ENCODE measurements at regions of chr9 and their contacts with region 1.

Region 1: DNA sequence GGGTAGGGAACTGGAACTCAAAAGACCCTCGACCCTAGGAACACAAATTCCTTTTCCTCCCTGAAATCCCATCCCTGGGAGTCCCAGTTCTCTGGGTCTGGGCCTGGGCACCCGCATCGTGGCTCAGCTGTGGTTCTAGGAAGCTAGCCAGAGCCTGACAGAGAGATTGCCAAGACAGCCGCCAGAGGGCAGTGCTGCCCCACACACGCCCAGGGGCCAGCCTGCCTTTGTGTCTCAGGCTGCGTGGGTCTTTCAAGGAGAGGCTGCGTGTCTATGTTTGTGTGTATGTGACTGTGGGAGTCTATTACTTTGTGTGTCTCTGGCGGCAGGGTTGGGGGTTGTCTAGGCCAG is 32.0 kb upstream of the TTLL11 start:
- DNase-seq: peak in 1 of 2 experiments; percentile 92
- H3K4me3 ChIP-seq: 0 out of 8 replicates have a peak overlapping the region, but pooled peaks of 1 of the 4 experiments have one; percentile 67
- H3K27ac ChIP-seq: no peak overlapping the region
- H3K4me1 ChIP-seq: peaks cover 0 to 10% (median 3%) of the 10 kb centered on the region in 4 experiments; a peak in 6 of 7 replicates
- H3K27me3 ChIP-seq: peaks cover 9 to 26% (median 24%) of the 10 kb centered on the region in 4 experiments
- CTCF ChIP-seq: peak in 2 of 3 experiments; percentile 95 to 96; a peak in 3 of 4 replicates
- EP300 ChIP-seq: no peak
- POLR2A ChIP-seq: no peak
- RAD21 ChIP-seq: peak; percentile 99

Region 2: GRCh38 chr9:122087406-122088200 is 37.5 kb before region 1 on chr9:
- CTCF ChIA-PET with region 1: interaction called, 405 read pairs
- POLR2A ChIA-PET with region 1: no interaction called
- DNase-seq: no peak
- H3K4me3 ChIP-seq: no peak overlapping the region
- H3K27ac ChIP-seq: no peak overlapping the region
- H3K4me1 ChIP-seq: peaks cover 0 to 5% (median 0%) of the 10 kb centered on the region in 4 experiments; a peak in 4 of 7 replicates
- H3K27me3 ChIP-seq: peaks cover 0 to 10% (median 9%) of the 10 kb centered on the region in 4 experiments; a peak in 5 of 7 replicates
- CTCF ChIP-seq: no peak
- EP300 ChIP-seq: no peak
- POLR2A ChIP-seq: no peak
- RAD21 ChIP-seq: no peak

Region 3: DNA sequence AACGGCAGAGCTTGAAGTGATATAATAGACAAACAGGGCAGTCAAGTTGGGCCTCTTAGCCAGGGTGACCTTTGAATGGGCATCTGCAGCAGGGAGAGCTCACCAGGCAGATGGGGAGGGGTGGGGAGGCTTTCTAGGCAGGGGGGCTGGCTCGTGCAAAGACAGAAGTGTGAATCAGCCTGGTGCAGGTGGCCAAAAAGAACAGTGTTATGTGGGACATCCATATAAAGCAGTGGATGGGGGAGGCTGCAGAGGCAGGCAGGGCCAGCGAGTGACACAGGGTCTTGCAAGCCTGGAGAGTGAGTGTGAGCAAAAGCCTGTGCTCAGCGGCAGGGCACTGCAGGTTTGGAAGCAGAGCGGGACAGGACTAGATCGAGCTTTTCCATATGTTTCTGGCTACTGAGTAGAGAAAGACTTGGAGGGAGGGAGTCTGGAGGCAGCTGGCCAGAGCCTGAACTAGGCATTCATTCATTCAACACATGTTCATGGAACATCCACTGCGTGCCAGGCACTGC is 17.8 kb before region 1 on chr9:
- CTCF ChIA-PET with region 1: interaction called, 192 read pairs
- POLR2A ChIA-PET with region 1: no interaction called
- DNase-seq: no peak
- H3K4me3 ChIP-seq: no peak overlapping the region
- H3K27ac ChIP-seq: no peak overlapping the region
- H3K4me1 ChIP-seq: peaks cover 0 to 3% (median under 1%) of the 10 kb centered on the region in 4 experiments; a peak in 4 of 7 replicates
- H3K27me3 ChIP-seq: no peaks in the 10 kb centered on the region; a peak in 2 of 7 replicates
- CTCF ChIP-seq: no peak
- EP300 ChIP-seq: no peak
- POLR2A ChIP-seq: no peak
- RAD21 ChIP-seq: no peak

Region 4: GRCh38 chr9:122180651-122181050 is 55.5 kb after region 1 on chr9:
- CTCF ChIA-PET with region 1: interaction called, 11 read pairs
- POLR2A ChIA-PET with region 1: no interaction called
- DNase-seq: no peak
- H3K4me3 ChIP-seq: no peak overlapping the region
- H3K27ac ChIP-seq: no peak overlapping the region
- H3K4me1 ChIP-seq: no peaks in the 10 kb centered on the region; a peak in 1 of 7 replicates
- H3K27me3 ChIP-seq: no peaks in the 10 kb centered on the region
- CTCF ChIP-seq: no peak
- EP300 ChIP-seq: no peak
- POLR2A ChIP-seq: no peak
- RAD21 ChIP-seq: no peak

Region 5: DNA sequence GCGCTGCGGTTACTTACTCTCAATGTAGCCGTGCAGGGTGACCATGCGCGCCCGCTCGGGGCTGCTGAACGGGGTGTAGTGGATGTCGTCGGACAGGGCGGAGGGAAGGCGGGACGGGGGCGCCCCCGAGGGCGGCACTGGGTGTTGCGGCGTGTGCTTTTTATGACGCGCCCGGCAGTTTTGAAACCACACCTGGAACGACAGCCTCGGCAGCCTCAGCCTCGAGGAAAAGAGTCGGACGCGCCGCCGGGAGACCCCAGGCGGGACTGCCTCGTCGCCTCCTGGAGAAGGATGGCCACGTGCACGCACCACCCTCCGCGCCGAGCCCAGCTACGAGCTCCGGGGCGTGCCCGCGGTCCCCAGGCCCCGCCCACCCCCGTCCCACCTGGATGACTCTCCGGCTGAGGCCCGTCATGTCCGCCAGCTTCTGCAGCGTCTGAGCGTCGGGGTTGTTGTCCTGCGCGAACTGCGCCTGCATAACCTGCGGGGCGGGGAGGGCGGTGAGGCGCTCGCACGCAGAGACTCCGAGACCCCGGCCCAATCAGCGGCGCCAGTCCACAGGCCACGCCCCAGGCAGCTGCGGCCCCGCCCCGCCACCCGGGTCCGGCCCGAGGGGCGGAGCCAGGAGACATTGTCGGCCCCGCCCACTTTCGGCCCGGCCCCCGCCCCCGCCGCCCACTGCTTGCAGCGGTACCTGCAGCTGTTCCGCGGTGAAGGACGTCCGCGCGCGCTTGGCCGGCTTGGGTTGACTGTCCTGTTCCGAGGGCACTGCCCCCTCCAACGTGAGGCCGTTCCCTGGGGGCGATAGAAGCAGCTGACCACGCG is 88.7 kb after region 1 on chr9:
- CTCF ChIA-PET with region 1: interaction called, 56 read pairs
- POLR2A ChIA-PET with region 1: no interaction called
- DNase-seq: peak; percentile 87 to 97
- H3K4me3 ChIP-seq: peak overlapping the region; percentile 41 to 67 (median 52); a peak in 7 of 8 replicates
- H3K27ac ChIP-seq: no peak overlapping the region
- H3K4me1 ChIP-seq: peaks cover 0 to 13% (median 10%) of the 10 kb centered on the region in 4 experiments; a peak in 6 of 7 replicates
- H3K27me3 ChIP-seq: peaks cover 52 to 73% (median 68%) of the 10 kb centered on the region in 4 experiments
- CTCF ChIP-seq: no peak
- EP300 ChIP-seq: no peak
- POLR2A ChIP-seq: no peak
- RAD21 ChIP-seq: peak; percentile 18 to 20; a peak in 3 of 4 replicates

Region 6: DNA sequence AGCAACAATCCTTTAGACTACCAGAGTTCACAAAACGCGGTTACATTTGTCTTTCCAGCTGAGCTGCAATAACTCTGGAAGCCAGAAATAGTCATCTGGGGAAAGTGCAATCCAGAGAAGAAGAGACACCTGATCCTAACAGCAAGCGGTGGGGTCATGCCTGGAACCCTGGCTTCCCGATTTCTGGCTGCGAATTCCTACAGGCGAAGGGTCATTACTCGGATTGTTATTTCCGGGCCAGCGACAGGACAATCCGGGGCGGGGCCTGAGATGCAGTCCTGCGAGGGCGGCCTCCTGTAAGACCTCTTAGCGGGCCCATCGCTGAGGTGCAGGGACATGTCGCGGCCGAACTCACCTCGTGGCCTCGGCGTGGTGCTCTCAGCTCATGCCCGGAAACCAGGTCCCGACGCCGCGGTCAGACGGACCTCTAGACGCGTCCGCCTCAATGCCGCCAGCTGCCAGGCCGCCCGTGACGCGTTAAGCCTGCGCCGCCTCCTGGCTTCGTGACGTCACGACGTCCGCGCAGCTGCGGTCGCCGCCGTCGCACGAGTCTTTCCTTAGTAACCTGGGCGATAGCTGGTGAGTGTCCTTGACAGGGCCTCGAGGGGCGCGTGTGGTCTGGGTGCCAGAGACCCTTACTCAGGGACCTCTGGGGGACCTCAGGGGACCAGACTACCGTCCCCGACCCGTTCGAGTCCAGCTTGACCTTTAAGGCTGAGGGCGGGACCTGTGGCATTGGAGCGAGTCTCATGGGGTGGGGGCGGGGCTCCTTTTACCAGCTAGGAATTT is 139.4 kb after region 1 on chr9 and contains the starts of genes MRRF and RBM18:
- CTCF ChIA-PET with region 1: interaction called, 72 read pairs
- POLR2A ChIA-PET with region 1: no interaction called
- DNase-seq: peak; percentile 77 to 97
- H3K4me3 ChIP-seq: peak within 1 kb of the TSS; percentile 78 to 92 (median 88)
- H3K27ac ChIP-seq: peak within 1 kb of the TSS; percentile 85
- H3K4me1 ChIP-seq: peaks cover 0 to 6% (median 2%) of the 10 kb centered on the region in 4 experiments; a peak in 4 of 7 replicates
- H3K27me3 ChIP-seq: no peaks in the 10 kb centered on the region
- CTCF ChIP-seq: no peak
- EP300 ChIP-seq: peak in 1 of 2 experiments; percentile 48; a peak in 1 of 3 replicates
- POLR2A ChIP-seq: peak; percentile 74 to 93
- RAD21 ChIP-seq: peak in 1 of 2 experiments; percentile 33; a peak in 2 of 4 replicates
- total RNA-seq, gene MRRF: 42.2 and 47.8 TPM in 2 replicates
- total RNA-seq, gene RBM18: 14.3 and 15.0 TPM in 2 replicates

Region 7: GRCh38 chr9:122810306-122810946 is 685.3 kb after region 1 on chr9:
- CTCF ChIA-PET with region 1: interaction called, 44 read pairs
- POLR2A ChIA-PET with region 1: no interaction called
- DNase-seq: peak; percentile 29 to 81
- H3K4me3 ChIP-seq: no peak overlapping the region
- H3K27ac ChIP-seq: no peak overlapping the region
- H3K4me1 ChIP-seq: peaks cover 0 to 3% (median 2%) of the 10 kb centered on the region in 4 experiments; a peak in 4 of 7 replicates
- H3K27me3 ChIP-seq: no peaks in the 10 kb centered on the region
- CTCF ChIP-seq: peak; percentile 49 to 87 (median 84)
- EP300 ChIP-seq: no peak
- POLR2A ChIP-seq: no peak
- RAD21 ChIP-seq: peak; percentile 97

Measured in H1 (cell line).